B cell (primary cell): ENCODE measurements at regions of chr19 and their contacts with region 1.

Region 1: GRCh38 chr19:7943444-7944176 is at the start of gene TIMM44:
- DNase-seq: peak; percentile 99
- ATAC-seq: peak; percentile 96
- H3K4me3 ChIP-seq: peak within 1 kb of the TSS; percentile 81 to 97 (median 87)
- H3K4me3 Mint-ChIP-seq: peak within 1 kb of the TSS; percentile 96
- H3K27ac ChIP-seq: peak within 1 kb of the TSS; percentile 94 to 99
- H3K27ac Mint-ChIP-seq: peak within 1 kb of the TSS; percentile 97
- H3K4me1 ChIP-seq: peaks cover 12 to 21% of the 10 kb centered on the region in 2 donors
- H3K4me1 Mint-ChIP-seq: peaks cover 30% of the 10 kb centered on the region
- H3K27me3 ChIP-seq: no peaks in the 10 kb centered on the region
- H3K27me3 Mint-ChIP-seq: no peaks in the 10 kb centered on the region
- CTCF ChIP-seq: no peak
- total RNA-seq, gene TIMM44: 62.1 and 66.5 TPM in 2 replicates

Region 2: DNA sequence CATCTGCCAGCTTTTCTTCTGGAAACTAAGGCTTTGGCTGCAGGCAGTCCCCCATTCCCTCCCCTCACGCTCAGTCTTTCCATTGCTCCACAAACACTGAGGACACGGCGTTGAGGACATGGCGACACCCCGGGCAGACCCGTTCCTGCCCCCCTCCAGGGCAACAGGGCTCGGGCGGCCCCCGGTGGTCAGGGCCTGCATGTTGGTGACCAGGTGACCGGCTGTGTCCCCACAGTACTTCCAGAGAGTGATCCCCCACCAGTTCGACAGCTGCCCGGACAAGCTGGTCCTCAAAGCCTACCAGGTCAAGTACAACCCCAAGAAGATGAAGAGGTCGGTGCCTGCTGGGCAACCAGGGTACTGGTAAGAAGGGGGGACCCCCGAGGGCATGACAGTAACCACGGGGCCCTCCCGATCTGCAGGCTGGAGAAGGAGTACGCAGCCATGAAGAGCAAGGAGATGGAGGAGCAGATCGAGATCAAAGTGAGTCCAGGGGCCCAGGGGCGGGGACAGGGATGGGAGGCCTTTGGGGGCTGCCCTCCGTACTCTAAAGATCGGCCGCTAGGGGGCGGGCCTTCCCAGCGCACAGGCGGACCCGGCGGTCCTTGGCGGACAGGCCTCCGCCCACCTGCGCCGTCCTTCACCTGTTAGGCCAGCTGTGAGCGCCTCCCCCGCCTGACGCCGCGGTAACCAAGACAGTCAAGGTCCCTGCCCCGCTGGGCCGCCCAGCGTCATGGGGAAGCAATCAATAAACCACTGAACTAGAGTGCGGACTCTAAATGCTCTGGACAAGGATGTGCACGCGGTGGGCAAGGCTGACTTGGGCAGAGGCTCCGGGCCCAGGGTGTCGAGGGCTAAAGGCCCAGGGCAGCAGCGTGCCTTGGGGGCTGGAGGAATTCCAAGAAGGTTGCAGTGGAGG is 90.5 kb before region 1 on chr19:
- CTCF ChIA-PET with region 1: interaction called, 7 read pairs
- POLR2A ChIA-PET with region 1: no interaction called
- intact Hi-C with region 1: loop called (anchors 5 kb)
- DNase-seq: peak; percentile 81
- ATAC-seq: peak; percentile 89
- H3K4me3 ChIP-seq: no peak overlapping the region
- H3K4me3 Mint-ChIP-seq: no peak overlapping the region
- H3K27ac ChIP-seq: no peak overlapping the region
- H3K27ac Mint-ChIP-seq: no peak overlapping the region
- H3K4me1 ChIP-seq: peaks cover 6 to 7% of the 10 kb centered on the region in 2 donors
- H3K4me1 Mint-ChIP-seq: peaks cover 8% of the 10 kb centered on the region
- H3K27me3 ChIP-seq: peaks cover 0 to 33% (median 0%) of the 10 kb centered on the region in 4 experiments
- H3K27me3 Mint-ChIP-seq: peaks cover 3% of the 10 kb centered on the region
- CTCF ChIP-seq: peak; percentile 86

Region 3: GRCh38 chr19:7903244-7904073 is 40.2 kb before region 1 on chr19 and contains the start of gene MAP2K7:
- CTCF ChIA-PET with region 1: interaction called, 5 read pairs
- POLR2A ChIA-PET with region 1: interaction called, 4 read pairs
- intact Hi-C with region 1: loop called (anchors 1 kb)
- DNase-seq: peak; percentile 100
- ATAC-seq: peak; percentile 89
- H3K4me3 ChIP-seq: peak within 1 kb of the TSS; percentile 53 to 79 (median 73)
- H3K4me3 Mint-ChIP-seq: peak within 1 kb of the TSS; percentile 95
- H3K27ac ChIP-seq: peak within 1 kb of the TSS; percentile 67 to 82
- H3K27ac Mint-ChIP-seq: peak within 1 kb of the TSS; percentile 99
- H3K4me1 ChIP-seq: peaks cover 20 to 21% of the 10 kb centered on the region in 2 donors
- H3K4me1 Mint-ChIP-seq: peaks cover 29% of the 10 kb centered on the region
- H3K27me3 ChIP-seq: no peaks in the 10 kb centered on the region
- H3K27me3 Mint-ChIP-seq: no peaks in the 10 kb centered on the region
- CTCF ChIP-seq: peak; percentile 66
- total RNA-seq, gene MAP2K7: 71.9 and 76.3 TPM in 2 replicates

Region 4: GRCh38 chr19:7925171-7925851 is 18.3 kb before region 1 on chr19:
- CTCF ChIA-PET with region 1: interaction called, 28 read pairs
- POLR2A ChIA-PET with region 1: interaction called, 29 read pairs
- intact Hi-C with region 1: loop called (anchors 1 kb)
- DNase-seq: peak; percentile 85
- ATAC-seq: no peak
- H3K4me3 ChIP-seq: peak overlapping the region in 3 of 5 experiments; percentile 25 to 57 (median 41)
- H3K4me3 Mint-ChIP-seq: peak overlapping the region; percentile 85
- H3K27ac ChIP-seq: no peak overlapping the region
- H3K27ac Mint-ChIP-seq: peak overlapping the region; percentile 65
- H3K4me1 ChIP-seq: peaks cover 21 to 26% of the 10 kb centered on the region in 2 donors
- H3K4me1 Mint-ChIP-seq: peaks cover 28% of the 10 kb centered on the region
- H3K27me3 ChIP-seq: no peaks in the 10 kb centered on the region
- H3K27me3 Mint-ChIP-seq: no peaks in the 10 kb centered on the region
- CTCF ChIP-seq: peak; percentile 84

Region 5: DNA sequence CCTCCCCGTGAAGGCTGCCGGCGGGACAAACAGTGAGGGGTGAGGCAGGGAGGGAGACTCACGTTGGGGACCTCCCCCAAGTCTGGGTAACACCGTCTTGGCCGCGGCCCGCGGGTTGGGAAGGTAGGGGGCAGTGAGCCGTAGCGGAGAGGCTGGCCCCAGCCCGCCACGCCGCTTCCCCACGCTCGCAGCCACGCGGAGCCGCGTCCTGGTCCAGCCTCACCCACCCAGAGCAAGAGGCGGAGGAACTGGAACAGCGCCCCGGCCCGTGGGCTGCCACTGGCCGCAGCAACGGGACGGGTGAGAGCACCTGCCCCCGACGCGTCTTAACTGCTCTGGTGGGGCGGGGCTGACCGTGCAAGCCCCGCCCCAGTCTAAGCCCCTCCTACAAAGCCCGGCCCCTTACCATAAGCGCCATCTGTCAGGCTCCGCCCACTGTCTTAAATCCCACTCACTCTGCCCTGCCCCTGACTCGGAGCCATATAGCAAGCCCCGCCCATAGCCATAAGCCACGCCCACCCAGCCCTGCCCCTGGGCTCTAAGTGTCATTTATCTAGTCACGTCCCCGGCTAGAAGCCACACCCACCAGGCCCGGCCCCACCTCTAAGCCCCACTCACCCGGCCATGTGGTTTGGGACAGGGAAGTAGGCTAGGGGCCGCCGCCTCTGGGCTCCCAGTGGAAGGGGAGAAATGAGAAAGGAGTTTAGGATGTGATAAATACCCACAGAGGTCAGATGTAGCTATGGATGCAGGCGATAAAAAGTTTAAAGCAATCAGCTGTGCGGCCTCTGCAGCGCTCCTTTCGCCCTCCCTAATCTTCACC is 106.9 kb after region 1 on chr19:
- CTCF ChIA-PET with region 1: interaction called, 4 read pairs
- POLR2A ChIA-PET with region 1: no interaction called
- intact Hi-C with region 1: loop called (anchors 1 kb)
- DNase-seq: peak; percentile 95
- ATAC-seq: peak; percentile 96
- H3K4me3 ChIP-seq: peak overlapping the region in 4 of 5 experiments; percentile 37 to 62 (median 52)
- H3K4me3 Mint-ChIP-seq: peak overlapping the region; percentile 83
- H3K27ac ChIP-seq: no peak overlapping the region
- H3K27ac Mint-ChIP-seq: peak overlapping the region; percentile 53
- H3K4me1 ChIP-seq: peaks cover 13 to 23% of the 10 kb centered on the region in 2 donors
- H3K4me1 Mint-ChIP-seq: peaks cover 13% of the 10 kb centered on the region
- H3K27me3 ChIP-seq: no peaks in the 10 kb centered on the region
- H3K27me3 Mint-ChIP-seq: peaks cover 3% of the 10 kb centered on the region
- CTCF ChIP-seq: no peak

Region 6: GRCh38 chr19:8252922-8253589 is 309.4 kb after region 1 on chr19:
- CTCF ChIA-PET with region 1: interaction called, 12 read pairs
- POLR2A ChIA-PET with region 1: no interaction called
- intact Hi-C with region 1: loop called (anchors 1 kb)
- DNase-seq: peak; percentile 87
- ATAC-seq: peak; percentile 95
- H3K4me3 ChIP-seq: no peak overlapping the region
- H3K4me3 Mint-ChIP-seq: no peak overlapping the region
- H3K27ac ChIP-seq: peak overlapping the region in 1 of 2 donors; percentile 28
- H3K27ac Mint-ChIP-seq: no peak overlapping the region
- H3K4me1 ChIP-seq: peaks cover 5 to 7% of the 10 kb centered on the region in 2 donors
- H3K4me1 Mint-ChIP-seq: peaks cover 8% of the 10 kb centered on the region
- H3K27me3 ChIP-seq: no peaks in the 10 kb centered on the region
- H3K27me3 Mint-ChIP-seq: no peaks in the 10 kb centered on the region
- CTCF ChIP-seq: peak; percentile 98

Region 7: DNA sequence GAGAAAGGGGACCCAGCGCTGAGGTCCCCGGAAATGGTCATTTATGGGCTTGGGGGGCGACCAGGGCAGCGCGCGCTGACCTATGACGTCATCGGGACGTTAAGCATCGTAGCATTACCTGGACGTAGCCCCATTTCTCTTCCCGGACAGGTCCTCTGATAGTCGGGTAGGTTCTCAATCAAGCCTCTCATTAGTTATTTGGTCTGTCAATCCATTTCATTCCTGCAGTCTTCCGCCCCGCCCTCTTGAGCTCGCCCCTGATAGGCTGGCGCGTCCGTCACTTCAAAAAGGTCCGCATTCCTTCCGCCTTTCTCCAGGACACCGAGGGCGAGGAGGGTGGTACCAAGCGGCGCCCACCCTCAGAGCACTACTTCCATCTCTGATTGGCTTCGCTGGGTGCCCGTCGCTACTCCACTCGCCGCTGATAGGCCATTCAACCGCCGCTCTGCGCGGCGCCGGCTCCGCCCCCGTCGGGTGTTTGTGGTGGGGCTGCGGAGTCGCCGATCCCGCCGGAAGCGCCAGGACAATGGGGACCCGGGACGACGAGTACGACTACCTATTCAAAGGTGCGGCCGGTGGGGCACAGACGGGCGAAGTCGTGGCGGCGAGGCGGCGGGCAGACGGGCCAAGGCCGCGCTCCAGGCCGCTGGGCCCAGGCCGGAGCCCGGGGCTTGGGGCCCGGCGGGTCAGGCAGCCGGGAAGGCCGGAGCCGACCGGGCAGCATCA is 446.4 kb after region 1 on chr19 and contains the start of gene RAB11B:
- CTCF ChIA-PET with region 1: no interaction called
- POLR2A ChIA-PET with region 1: interaction called, 3 read pairs
- intact Hi-C with region 1: loop called (anchors 1 kb)
- DNase-seq: peak; percentile 100
- ATAC-seq: peak; percentile 86
- H3K4me3 ChIP-seq: peak within 1 kb of the TSS; percentile 54 to 89 (median 82)
- H3K4me3 Mint-ChIP-seq: peak within 1 kb of the TSS; percentile 95
- H3K27ac ChIP-seq: peak within 1 kb of the TSS; percentile 70 to 96
- H3K27ac Mint-ChIP-seq: peak within 1 kb of the TSS; percentile 98
- H3K4me1 ChIP-seq: peaks cover 10 to 20% of the 10 kb centered on the region in 2 donors
- H3K4me1 Mint-ChIP-seq: peaks cover 29% of the 10 kb centered on the region
- H3K27me3 ChIP-seq: no peaks in the 10 kb centered on the region
- H3K27me3 Mint-ChIP-seq: no peaks in the 10 kb centered on the region
- CTCF ChIP-seq: no peak
- total RNA-seq, gene RAB11B: 126 and 130 TPM in 2 replicates